CD4-positive, alpha-beta memory T cell (primary cell): ENCODE measurements at regions of chr4 and their contacts with region 1.

Region 1: DNA sequence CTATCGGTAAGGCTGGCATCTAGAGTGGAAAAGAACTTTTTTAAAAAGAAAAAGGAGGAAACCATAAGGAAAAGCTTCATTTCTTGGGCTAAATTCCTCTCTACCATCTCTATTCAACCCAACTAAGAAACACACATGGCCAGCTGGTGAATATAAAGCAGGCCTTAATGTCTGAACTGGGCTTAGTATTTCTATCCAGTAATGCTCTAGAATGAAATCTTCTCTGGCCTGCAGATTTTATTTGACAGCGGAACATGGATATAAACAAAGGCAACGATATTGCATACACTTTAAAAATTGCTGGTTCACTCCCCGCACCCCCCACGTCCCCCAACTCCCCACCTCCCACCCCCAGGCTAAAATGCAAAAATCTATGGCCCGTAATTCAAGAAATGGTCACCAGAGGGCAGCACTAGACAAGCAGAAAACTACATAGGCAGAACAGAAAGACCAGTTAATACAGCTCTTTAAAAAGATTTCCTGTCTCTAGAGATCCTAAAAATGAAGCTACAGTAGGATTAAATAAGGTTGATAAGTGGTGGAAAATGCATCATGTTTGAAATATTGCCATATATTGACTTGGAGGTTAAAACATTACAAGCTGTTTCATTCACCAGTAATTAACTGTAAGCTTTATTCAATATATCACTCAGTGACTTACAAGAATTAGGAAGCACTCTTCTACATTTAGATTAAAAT is 155.2 kb upstream of the GALNT7 start:
- DNase-seq: peak in 4 of 5 donors; percentile 38 to 53 (median 46)
- H3K4me3 ChIP-seq: no peak overlapping the region
- H3K4me3 Mint-ChIP-seq: no peak overlapping the region
- H3K27ac ChIP-seq: no peak overlapping the region
- H3K27ac Mint-ChIP-seq: no peak overlapping the region
- H3K4me1 ChIP-seq: no peaks in the 10 kb centered on the region
- H3K4me1 Mint-ChIP-seq: peaks cover 0 to 2% (median 0%) of the 10 kb centered on the region in 4 donors
- H3K27me3 ChIP-seq: no peaks in the 10 kb centered on the region
- H3K27me3 Mint-ChIP-seq: peaks cover 0 to 3% of the 10 kb centered on the region in 2 donors

Region 2: GRCh38 chr4:172666711-172667368 is 346.5 kb before region 1 on chr4:
- CTCF ChIA-PET with region 1: no interaction called
- POLR2A ChIA-PET with region 1: no interaction called
- intact Hi-C with region 1: no loop called
- DNase-seq: no peak
- H3K4me3 ChIP-seq: no peak overlapping the region
- H3K4me3 Mint-ChIP-seq: no peak overlapping the region
- H3K27ac ChIP-seq: no peak overlapping the region
- H3K27ac Mint-ChIP-seq: no peak overlapping the region
- H3K4me1 ChIP-seq: no peaks in the 10 kb centered on the region
- H3K4me1 Mint-ChIP-seq: no peaks in the 10 kb centered on the region
- H3K27me3 ChIP-seq: no peaks in the 10 kb centered on the region
- H3K27me3 Mint-ChIP-seq: no peaks in the 10 kb centered on the region

Region 3: DNA sequence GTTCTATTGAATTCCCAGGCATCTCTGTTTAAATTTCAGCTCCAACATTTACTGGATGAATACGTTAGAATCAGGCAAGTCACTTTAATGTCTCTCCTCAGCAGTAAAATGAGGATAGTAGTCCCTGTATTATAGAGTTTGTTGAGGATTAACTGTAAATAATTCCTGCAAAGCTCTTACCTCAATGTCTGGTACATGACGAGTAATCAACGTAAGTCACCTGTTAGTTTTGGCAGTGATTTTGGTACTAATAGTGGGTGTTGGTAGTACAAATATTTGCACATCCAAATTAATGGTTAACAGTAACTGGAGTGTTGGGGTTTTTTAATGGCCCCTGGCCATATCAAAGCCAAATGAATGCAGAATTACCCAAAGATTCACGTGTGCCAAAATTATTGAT is 34.5 kb before region 1 on chr4:
- CTCF ChIA-PET with region 1: no interaction called
- POLR2A ChIA-PET with region 1: no interaction called
- intact Hi-C with region 1: no loop called
- DNase-seq: no peak
- H3K4me3 ChIP-seq: no peak overlapping the region
- H3K4me3 Mint-ChIP-seq: no peak overlapping the region
- H3K27ac ChIP-seq: no peak overlapping the region
- H3K27ac Mint-ChIP-seq: no peak overlapping the region
- H3K4me1 ChIP-seq: no peaks in the 10 kb centered on the region
- H3K4me1 Mint-ChIP-seq: no peaks in the 10 kb centered on the region
- H3K27me3 ChIP-seq: no peaks in the 10 kb centered on the region
- H3K27me3 Mint-ChIP-seq: peaks cover 9 to 16% of the 10 kb centered on the region in 2 donors

Region 4: GRCh38 chr4:172989984-172990820 is 23.2 kb before region 1 on chr4:
- CTCF ChIA-PET with region 1: interaction called, 15 read pairs
- POLR2A ChIA-PET with region 1: no interaction called
- intact Hi-C with region 1: no loop called
- DNase-seq: no peak
- H3K4me3 ChIP-seq: no peak overlapping the region
- H3K4me3 Mint-ChIP-seq: no peak overlapping the region
- H3K27ac ChIP-seq: no peak overlapping the region
- H3K27ac Mint-ChIP-seq: no peak overlapping the region
- H3K4me1 ChIP-seq: no peaks in the 10 kb centered on the region
- H3K4me1 Mint-ChIP-seq: no peaks in the 10 kb centered on the region
- H3K27me3 ChIP-seq: no peaks in the 10 kb centered on the region
- H3K27me3 Mint-ChIP-seq: peaks cover 0 to 8% of the 10 kb centered on the region in 2 donors

Region 5: DNA sequence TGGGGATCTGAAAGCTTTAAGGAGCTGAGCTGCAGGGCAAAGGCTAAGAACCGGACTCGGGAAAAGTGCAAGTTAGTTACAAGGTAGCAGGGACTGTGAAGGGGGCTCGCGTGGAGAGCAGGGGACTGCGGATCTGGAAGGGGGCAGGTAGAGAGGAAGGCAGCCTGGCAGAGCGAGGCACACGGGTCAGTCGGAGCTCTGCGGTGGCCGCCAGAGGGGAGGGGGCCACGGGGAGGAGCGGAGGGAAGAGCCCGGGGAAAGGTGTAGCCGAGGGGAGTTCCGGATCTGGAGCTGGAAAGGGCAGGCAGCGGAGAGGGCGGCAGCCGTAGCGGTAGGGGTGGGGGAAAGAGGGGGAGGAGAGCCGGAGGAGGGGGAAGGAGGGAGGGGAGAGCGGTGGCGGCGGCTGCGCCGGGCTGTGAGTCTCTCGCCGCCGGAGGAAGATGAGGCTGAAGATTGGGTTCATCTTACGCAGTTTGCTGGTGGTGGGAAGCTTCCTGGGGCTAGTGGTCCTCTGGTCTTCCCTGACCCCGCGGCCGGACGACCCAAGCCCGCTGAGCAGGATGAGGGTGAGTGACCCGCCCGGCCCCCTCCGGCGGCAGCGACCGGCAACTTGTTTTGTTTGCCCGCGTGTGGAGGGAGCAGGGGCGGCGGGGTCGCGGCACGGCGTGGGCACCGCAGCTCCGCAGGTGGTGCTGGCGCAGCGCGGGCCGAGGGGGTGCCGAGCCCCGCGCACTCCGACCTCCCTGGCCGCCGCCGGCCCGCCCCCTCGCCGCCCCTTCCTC is 155.2 kb after region 1 on chr4 and contains the start of gene GALNT7:
- CTCF ChIA-PET with region 1: interaction called, 12 read pairs
- POLR2A ChIA-PET with region 1: no interaction called
- intact Hi-C with region 1: loop called (anchors 2 kb)
- DNase-seq: peak; percentile 52 to 78 (median 54)
- H3K4me3 ChIP-seq: peak within 1 kb of the TSS; percentile 66 to 78
- H3K4me3 Mint-ChIP-seq: peak within 1 kb of the TSS; percentile 95 to 99 (median 98)
- H3K27ac ChIP-seq: peak within 1 kb of the TSS; percentile 58
- H3K27ac Mint-ChIP-seq: peak within 1 kb of the TSS; percentile 63 to 95 (median 89)
- H3K4me1 ChIP-seq: peaks cover 26% of the 10 kb centered on the region
- H3K4me1 Mint-ChIP-seq: peaks cover 32 to 48% (median 40%) of the 10 kb centered on the region in 4 donors
- H3K27me3 ChIP-seq: no peaks in the 10 kb centered on the region
- H3K27me3 Mint-ChIP-seq: no peaks in the 10 kb centered on the region
- total RNA-seq, gene GALNT7: 24.1 to 26.3 TPM

Region 6: DNA sequence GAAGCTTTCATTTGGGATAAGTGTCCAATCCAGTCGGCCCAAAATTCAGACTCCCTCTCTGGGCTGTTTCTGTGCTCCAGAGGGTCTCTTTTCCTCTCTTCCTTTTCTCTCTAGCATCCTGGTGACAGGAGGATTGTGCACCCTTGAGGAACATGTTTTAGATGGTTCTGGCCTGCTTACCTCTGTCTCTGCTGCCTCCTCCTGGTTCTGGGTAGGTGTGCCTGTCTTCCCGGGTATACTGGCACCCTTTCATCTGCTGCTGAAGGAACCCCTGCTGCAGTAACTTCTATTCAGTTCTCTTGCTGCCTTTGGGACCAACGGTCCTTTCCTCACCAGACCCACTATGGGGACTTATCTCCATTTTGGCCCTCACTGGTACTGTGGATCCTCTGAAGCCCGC is 267.6 kb after region 1 on chr4:
- CTCF ChIA-PET with region 1: interaction called, 13 read pairs
- POLR2A ChIA-PET with region 1: no interaction called
- intact Hi-C with region 1: no loop called
- DNase-seq: no peak
- H3K4me3 ChIP-seq: no peak overlapping the region
- H3K4me3 Mint-ChIP-seq: no peak overlapping the region
- H3K27ac ChIP-seq: no peak overlapping the region
- H3K27ac Mint-ChIP-seq: no peak overlapping the region
- H3K4me1 ChIP-seq: no peaks in the 10 kb centered on the region
- H3K4me1 Mint-ChIP-seq: peaks cover 0 to 2% (median 0%) of the 10 kb centered on the region in 4 donors
- H3K27me3 ChIP-seq: no peaks in the 10 kb centered on the region
- H3K27me3 Mint-ChIP-seq: no peaks in the 10 kb centered on the region

Region 7: DNA sequence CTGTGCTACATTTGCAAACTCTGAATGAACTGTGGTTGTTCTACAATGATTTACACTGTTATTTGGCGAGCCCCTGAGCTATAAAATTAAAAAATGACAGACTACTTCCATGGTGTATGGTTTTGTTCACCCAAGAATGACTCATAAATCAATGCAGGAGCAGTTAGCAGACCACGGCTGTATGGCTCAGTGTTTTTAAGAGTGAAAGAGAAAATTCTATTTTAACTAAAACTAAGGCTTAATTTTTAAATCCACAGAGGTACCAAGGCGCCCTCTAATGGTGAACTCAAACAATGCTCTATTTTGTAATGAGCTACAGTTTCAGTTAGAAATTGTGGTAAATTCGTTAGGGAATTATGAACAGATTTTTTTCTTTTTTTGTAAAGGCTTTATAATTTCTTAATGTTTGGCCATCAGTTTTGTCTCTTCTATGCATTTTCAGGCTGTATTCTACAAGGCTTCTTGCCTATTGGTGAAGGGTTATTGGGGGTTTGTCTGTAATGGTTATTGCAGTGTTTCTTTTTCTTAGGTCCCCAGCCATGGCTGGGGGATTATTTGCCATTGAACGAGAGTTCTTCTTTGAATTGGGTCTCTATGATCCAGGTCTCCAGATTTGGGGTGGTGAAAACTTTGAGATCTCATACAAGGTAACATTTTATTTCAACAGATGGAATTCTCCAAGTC is 288.3 kb after region 1 on chr4:
- CTCF ChIA-PET with region 1: interaction called, 145 read pairs
- POLR2A ChIA-PET with region 1: interaction called, 5 read pairs
- intact Hi-C with region 1: loop called (anchors 1 kb)
- DNase-seq: peak in 4 of 5 donors; percentile 25 to 32 (median 28)
- H3K4me3 ChIP-seq: no peak overlapping the region
- H3K4me3 Mint-ChIP-seq: no peak overlapping the region
- H3K27ac ChIP-seq: no peak overlapping the region
- H3K27ac Mint-ChIP-seq: no peak overlapping the region
- H3K4me1 ChIP-seq: no peaks in the 10 kb centered on the region
- H3K4me1 Mint-ChIP-seq: peaks cover 0 to 6% (median 2%) of the 10 kb centered on the region in 4 donors
- H3K27me3 ChIP-seq: no peaks in the 10 kb centered on the region
- H3K27me3 Mint-ChIP-seq: no peaks in the 10 kb centered on the region

Region 8: DNA sequence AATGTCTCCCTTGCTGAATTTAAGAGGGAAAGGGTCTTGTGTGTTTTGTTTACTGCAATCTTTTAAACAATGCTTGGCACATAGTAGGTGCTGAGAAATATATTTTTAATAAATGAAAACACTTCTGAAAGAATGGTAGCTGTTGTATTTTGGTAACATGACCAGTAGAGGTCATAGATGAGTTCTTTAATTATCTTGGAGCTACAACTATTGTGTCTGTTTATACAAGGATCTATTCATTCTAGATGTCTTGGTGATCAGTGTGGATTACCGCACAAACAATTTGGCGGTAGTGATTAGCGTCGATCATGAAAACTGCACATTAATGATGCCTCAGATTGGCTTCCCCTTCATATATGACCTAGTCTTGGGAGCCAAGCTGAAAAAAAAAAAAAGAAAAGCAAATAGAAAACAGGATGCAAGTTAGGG is 407.0 kb after region 1 on chr4:
- CTCF ChIA-PET with region 1: interaction called, 10 read pairs
- POLR2A ChIA-PET with region 1: no interaction called
- intact Hi-C with region 1: loop called (anchors 1 kb)
- DNase-seq: peak in 4 of 5 donors; percentile 17 to 35 (median 26)
- H3K4me3 ChIP-seq: no peak overlapping the region
- H3K4me3 Mint-ChIP-seq: peak overlapping the region in 1 of 8 donors; percentile 0
- H3K27ac ChIP-seq: no peak overlapping the region
- H3K27ac Mint-ChIP-seq: no peak overlapping the region
- H3K4me1 ChIP-seq: peaks cover 10% of the 10 kb centered on the region
- H3K4me1 Mint-ChIP-seq: peaks cover 11 to 16% (median 14%) of the 10 kb centered on the region in 4 donors
- H3K27me3 ChIP-seq: no peaks in the 10 kb centered on the region
- H3K27me3 Mint-ChIP-seq: no peaks in the 10 kb centered on the region